CD4-positive, alpha-beta memory T cell (primary cell): ENCODE measurements at regions of chr4 and their contacts with region 1.

Region 1: DNA sequence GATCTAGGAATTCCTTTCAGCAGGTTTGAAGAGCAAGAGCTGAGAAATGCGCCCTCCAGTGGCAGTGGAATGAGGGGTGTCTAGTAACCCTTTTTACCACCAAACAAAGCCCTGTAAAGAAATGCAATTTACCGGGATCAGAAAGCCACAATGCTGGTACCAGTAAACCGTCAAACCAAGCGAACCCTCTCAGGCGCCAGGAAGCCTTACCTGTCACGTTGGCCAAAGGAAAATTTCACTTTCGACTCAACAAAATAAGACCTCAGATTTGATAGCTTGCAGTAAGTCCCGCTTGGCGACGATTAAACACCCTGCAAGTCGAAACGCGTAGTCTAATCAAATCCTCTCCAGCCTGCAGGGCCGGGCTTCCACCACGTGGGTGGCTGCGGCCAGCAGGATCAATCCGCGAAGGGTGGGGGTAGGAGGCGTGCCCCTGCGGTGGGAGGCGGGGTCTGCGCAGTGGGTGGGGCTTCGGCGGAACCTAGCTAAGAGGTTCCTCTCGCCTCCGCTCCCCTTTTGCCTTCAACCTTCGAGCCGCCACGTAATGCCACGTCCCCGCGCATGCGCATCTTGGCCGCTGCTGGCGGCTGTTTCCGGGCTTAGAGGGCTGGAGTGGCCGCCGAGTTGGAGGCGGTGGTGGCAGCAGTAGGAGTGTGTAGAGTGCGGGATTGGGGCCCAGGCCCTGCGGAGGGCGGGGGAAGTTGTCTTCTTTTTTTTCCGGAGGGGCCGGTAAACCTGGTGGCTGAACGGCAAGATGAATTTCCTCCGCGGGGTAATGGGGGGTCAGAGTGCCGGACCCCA is at the start of gene USO1:
- DNase-seq: peak; percentile 99
- H3K4me3 ChIP-seq: peak within 1 kb of the TSS; percentile 91 to 93
- H3K4me3 Mint-ChIP-seq: peak within 1 kb of the TSS; percentile 97 to 100 (median 100)
- H3K27ac ChIP-seq: peak within 1 kb of the TSS; percentile 86
- H3K27ac Mint-ChIP-seq: peak within 1 kb of the TSS; percentile 98 to 100 (median 99)
- H3K4me1 ChIP-seq: peaks cover 52% of the 10 kb centered on the region
- H3K4me1 Mint-ChIP-seq: peaks cover 33 to 64% (median 49%) of the 10 kb centered on the region in 4 donors
- H3K27me3 ChIP-seq: no peaks in the 10 kb centered on the region
- H3K27me3 Mint-ChIP-seq: no peaks in the 10 kb centered on the region
- total RNA-seq, gene USO1: 48.6 to 49.4 TPM

Region 2: GRCh38 chr4:75422998-75423397 is 301.3 kb before region 1 on chr4:
- CTCF ChIA-PET with region 1: no interaction called
- POLR2A ChIA-PET with region 1: no interaction called
- intact Hi-C with region 1: no loop called
- DNase-seq: no peak
- H3K4me3 ChIP-seq: no peak overlapping the region
- H3K4me3 Mint-ChIP-seq: no peak overlapping the region
- H3K27ac ChIP-seq: no peak overlapping the region
- H3K27ac Mint-ChIP-seq: no peak overlapping the region
- H3K4me1 ChIP-seq: no peaks in the 10 kb centered on the region
- H3K4me1 Mint-ChIP-seq: no peaks in the 10 kb centered on the region
- H3K27me3 ChIP-seq: no peaks in the 10 kb centered on the region
- H3K27me3 Mint-ChIP-seq: peaks cover 16 to 17% of the 10 kb centered on the region in 2 donors

Region 3: GRCh38 chr4:75530556-75531322 is 193.5 kb before region 1 on chr4:
- CTCF ChIA-PET with region 1: no interaction called
- POLR2A ChIA-PET with region 1: no interaction called
- intact Hi-C with region 1: no loop called
- DNase-seq: no peak
- H3K4me3 ChIP-seq: no peak overlapping the region
- H3K4me3 Mint-ChIP-seq: no peak overlapping the region
- H3K27ac ChIP-seq: no peak overlapping the region
- H3K27ac Mint-ChIP-seq: no peak overlapping the region
- H3K4me1 ChIP-seq: no peaks in the 10 kb centered on the region
- H3K4me1 Mint-ChIP-seq: peaks cover 3 to 4% (median 4%) of the 10 kb centered on the region in 4 donors
- H3K27me3 ChIP-seq: no peaks in the 10 kb centered on the region
- H3K27me3 Mint-ChIP-seq: no peaks in the 10 kb centered on the region

Region 4: DNA sequence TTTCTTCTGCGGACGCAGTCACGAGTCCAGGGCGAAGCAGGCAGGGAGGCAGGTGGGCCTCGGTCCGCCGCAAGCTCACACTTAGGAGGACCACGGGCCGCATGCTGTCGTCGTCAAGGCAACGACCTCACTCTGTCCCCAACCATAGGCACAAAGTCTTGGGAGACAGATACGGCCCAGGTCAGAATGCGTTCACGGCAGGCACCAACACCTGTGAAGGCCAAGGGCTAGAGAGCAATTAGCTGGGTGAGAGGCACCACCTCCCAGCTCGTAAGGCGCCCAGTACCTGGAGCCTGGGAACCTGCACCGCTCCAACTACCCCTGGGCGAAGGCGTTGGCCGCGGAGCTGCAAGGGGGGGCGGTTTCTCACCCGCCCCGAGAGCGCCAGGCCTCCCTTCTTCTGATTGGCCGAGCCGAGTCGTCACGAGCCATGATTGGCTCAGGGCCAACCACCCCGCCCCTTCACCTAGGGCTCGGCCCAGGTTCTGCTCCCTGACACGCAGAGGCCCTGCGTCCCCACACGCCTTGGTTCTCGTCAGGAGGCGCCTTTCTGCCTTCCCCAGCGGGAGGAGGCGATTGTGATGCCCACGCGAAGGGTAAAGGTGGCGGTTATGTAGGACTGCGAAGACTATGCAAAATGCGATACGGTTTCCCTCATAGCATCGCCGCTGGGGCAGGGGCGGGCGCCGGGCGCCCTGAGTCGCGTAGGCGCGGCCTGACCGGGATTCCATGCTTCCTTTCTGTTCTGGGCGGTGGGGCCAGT is 93.9 kb before region 1 on chr4 and contains the start of gene CDKL2:
- CTCF ChIA-PET with region 1: interaction called, 20 read pairs
- POLR2A ChIA-PET with region 1: interaction called, 32 read pairs
- intact Hi-C with region 1: loop called (anchors 1 kb)
- DNase-seq: peak; percentile 91 to 93 (median 92)
- H3K4me3 ChIP-seq: peak within 1 kb of the TSS; percentile 33 to 66
- H3K4me3 Mint-ChIP-seq: peak within 1 kb of the TSS; percentile 88 to 95 (median 92)
- H3K27ac ChIP-seq: peak within 1 kb of the TSS; percentile 29
- H3K27ac Mint-ChIP-seq: peak within 1 kb of the TSS; percentile 26 to 93 (median 89)
- H3K4me1 ChIP-seq: peaks cover 6% of the 10 kb centered on the region
- H3K4me1 Mint-ChIP-seq: peaks cover 4 to 23% (median 11%) of the 10 kb centered on the region in 4 donors
- H3K27me3 ChIP-seq: no peaks in the 10 kb centered on the region
- H3K27me3 Mint-ChIP-seq: no peaks in the 10 kb centered on the region
- total RNA-seq, gene CDKL2: 0.35 to 0.39 TPM

Region 5: DNA sequence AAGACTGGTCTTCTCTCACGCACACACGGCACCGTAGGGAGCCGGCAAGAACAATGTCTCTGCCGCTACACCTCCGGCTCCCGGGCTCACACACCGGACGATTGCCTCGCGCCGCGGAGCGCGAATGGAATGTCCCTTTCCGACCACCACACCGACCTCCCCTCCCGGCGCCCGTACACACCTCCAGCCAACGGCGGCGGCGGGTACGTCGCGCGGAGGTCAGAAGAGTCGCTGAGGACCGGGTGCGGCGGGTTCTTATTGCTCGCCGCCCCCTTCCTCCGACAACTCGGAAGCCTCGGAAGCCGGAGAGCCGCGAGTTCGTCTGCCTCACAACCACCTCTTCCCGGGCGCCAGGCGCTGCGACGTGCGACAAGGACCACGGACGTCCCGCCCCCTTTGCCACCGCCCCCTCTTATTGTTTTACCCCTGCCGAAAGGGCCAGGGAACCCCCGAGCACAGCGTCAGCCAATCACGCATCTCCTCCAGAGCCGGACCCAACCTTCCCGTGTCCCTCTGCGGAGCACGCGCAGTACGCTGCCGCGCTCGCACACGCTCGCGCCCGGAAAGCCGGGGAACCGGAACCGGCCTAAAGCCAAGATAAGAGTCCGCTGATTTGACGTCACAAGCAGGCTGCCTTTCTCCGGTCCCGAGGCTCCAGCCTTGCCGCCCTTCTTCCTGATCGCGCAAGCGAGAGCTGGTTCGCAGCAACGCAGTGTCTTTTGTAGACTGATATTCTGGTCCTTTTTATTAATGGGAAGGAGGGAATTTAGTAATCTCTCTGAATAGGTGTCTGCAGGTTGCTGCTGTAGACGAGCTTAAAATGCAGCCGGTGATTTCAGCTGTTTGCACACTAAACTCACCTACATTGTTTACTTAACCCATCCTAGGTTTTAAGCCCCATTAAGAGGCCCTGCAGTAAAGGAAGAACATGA is 51.0 kb before region 1 on chr4 and contains the start of gene G3BP2:
- CTCF ChIA-PET with region 1: interaction called, 68 read pairs
- POLR2A ChIA-PET with region 1: interaction called, 163 read pairs
- intact Hi-C with region 1: loop called (anchors 1 kb)
- DNase-seq: peak; percentile 95 to 99 (median 98)
- H3K4me3 ChIP-seq: peak within 1 kb of the TSS; percentile 90 to 97
- H3K4me3 Mint-ChIP-seq: peak within 1 kb of the TSS; percentile 88 to 99 (median 98)
- H3K27ac ChIP-seq: peak within 1 kb of the TSS; percentile 97
- H3K27ac Mint-ChIP-seq: peak within 1 kb of the TSS; percentile 97 to 100 (median 98)
- H3K4me1 ChIP-seq: peaks cover 45% of the 10 kb centered on the region
- H3K4me1 Mint-ChIP-seq: peaks cover 32 to 61% (median 42%) of the 10 kb centered on the region in 4 donors
- H3K27me3 ChIP-seq: no peaks in the 10 kb centered on the region
- H3K27me3 Mint-ChIP-seq: no peaks in the 10 kb centered on the region
- total RNA-seq, gene G3BP2: 150 to 165 TPM

Region 6: DNA sequence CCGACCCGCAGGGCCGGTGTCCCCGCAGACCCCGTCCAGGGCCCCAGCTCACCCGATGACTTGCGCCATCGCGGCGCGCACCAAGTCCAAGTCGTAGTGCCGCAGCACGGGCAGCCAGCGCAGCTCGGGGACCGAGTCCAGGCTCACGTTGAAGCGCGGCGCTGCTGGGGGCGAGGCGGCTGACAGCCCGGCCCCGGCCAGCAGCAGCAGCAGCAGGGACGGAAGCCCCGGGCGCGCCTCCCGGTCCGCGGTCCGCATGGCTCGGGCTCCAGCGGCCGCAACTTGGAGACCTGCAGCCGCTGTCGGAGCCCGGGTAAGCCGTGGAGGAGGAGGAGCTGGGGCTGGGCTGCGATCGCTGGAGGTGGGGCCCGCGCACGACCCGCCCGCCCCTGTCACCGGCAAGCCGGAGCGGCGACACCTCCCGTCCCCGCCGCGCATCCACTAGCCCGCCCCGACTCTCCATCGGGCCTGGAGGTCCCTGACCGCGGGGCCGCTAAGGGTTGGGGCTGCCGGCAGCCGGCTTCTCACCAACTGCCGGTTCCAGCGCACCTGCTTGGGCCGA is 216.5 kb after region 1 on chr4 and contains the start of gene NAAA:
- CTCF ChIA-PET with region 1: interaction called, 3 read pairs
- POLR2A ChIA-PET with region 1: interaction called, 23 read pairs
- intact Hi-C with region 1: loop called (anchors 1 kb)
- DNase-seq: peak; percentile 73 to 84 (median 80)
- H3K4me3 ChIP-seq: peak within 1 kb of the TSS; percentile 80 to 98
- H3K4me3 Mint-ChIP-seq: peak within 1 kb of the TSS; percentile 97 to 99 (median 98)
- H3K27ac ChIP-seq: peak within 1 kb of the TSS; percentile 75
- H3K27ac Mint-ChIP-seq: peak within 1 kb of the TSS; percentile 96 to 98 (median 98)
- H3K4me1 ChIP-seq: peaks cover 19% of the 10 kb centered on the region
- H3K4me1 Mint-ChIP-seq: peaks cover 10 to 35% (median 19%) of the 10 kb centered on the region in 4 donors
- H3K27me3 ChIP-seq: no peaks in the 10 kb centered on the region
- H3K27me3 Mint-ChIP-seq: no peaks in the 10 kb centered on the region
- total RNA-seq, gene NAAA: 86.1 to 92.2 TPM

Region 7: DNA sequence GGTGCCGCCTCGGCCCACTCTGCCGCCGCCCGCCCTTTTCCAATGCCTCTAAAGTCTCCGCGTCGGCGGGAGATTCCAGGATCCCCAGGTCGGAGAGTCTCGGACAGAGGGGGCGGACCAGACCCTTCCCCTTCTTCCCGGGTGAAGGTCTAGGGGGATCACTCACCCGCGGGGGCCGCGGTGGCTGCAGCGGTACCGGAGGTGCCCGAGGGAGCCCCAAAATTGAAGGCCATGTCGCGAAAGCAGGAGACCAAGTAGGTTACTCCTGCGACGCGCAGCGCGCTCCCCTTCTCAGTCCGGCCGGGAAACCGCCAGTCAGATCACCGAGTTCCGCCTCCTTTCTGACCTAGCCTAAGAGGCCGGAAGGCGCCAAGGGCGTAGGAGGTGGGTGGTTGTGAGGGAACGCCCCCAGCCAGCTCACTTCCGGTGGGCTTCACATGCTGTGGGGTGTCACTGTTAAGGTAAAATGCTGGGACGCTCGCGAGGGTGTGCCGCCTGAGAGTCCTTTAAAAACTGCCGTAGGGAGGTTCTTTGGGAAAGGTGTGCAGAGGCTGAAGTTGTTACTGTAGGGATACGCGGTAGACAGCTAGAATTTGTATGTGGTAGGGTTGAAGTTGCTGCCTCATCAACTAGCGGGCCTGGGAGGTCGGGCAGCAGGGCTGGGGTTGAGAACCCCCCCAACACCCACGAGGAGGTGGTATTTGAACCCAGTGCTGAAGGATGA is 424.0 kb after region 1 on chr4 and contains the start of gene NUP54:
- CTCF ChIA-PET with region 1: no interaction called
- POLR2A ChIA-PET with region 1: interaction called, 3 read pairs
- intact Hi-C with region 1: loop called (anchors 5 kb)
- DNase-seq: peak; percentile 92 to 94 (median 93)
- H3K4me3 ChIP-seq: peak within 1 kb of the TSS; percentile 54 to 88
- H3K4me3 Mint-ChIP-seq: peak within 1 kb of the TSS; percentile 92 to 100 (median 98)
- H3K27ac ChIP-seq: peak within 1 kb of the TSS; percentile 88
- H3K27ac Mint-ChIP-seq: peak within 1 kb of the TSS; percentile 84 to 100 (median 98)
- H3K4me1 ChIP-seq: peaks cover 34% of the 10 kb centered on the region
- H3K4me1 Mint-ChIP-seq: peaks cover 21 to 46% (median 34%) of the 10 kb centered on the region in 4 donors
- H3K27me3 ChIP-seq: no peaks in the 10 kb centered on the region
- H3K27me3 Mint-ChIP-seq: no peaks in the 10 kb centered on the region
- total RNA-seq, gene NUP54: 49.3 to 52.8 TPM